Activated CD8-positive, alpha-beta T cell treated with anti-CD3 and anti-CD28 coated beads, Interleukin-2, amount 10 ng/mL, durations not matched to agents 7 days and 5 days (primary cell): ENCODE measurements at regions of chr9 and their contacts with region 1.

Region 1: DNA sequence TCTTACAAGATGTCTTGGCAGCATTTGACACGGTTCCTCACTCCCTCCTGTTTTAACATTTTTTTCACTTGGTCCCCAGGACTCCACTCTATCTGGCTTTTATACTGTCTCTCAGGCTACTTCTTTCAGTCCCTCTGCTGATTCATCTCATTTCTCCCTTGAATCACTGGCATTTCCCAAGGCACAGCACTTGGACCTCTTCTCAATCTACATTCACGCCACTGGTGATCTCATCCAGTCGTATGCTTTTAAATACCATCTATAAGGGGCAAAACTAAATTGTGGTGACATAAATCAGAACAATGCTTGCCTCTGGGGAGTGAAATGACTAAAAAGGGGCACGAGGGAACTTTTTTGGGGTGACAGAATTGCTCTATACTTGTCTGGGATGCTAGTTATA is 47.1 kb downstream of the MAPKAP1 start:
- DNase-seq: no peak
- ATAC-seq: no peak
- H3K4me3 Mint-ChIP-seq: no peak overlapping the region
- H3K27ac Mint-ChIP-seq: no peak overlapping the region
- H3K4me1 Mint-ChIP-seq: peaks cover 11% of the 10 kb centered on the region
- H3K27me3 Mint-ChIP-seq: no peaks in the 10 kb centered on the region

Region 2: DNA sequence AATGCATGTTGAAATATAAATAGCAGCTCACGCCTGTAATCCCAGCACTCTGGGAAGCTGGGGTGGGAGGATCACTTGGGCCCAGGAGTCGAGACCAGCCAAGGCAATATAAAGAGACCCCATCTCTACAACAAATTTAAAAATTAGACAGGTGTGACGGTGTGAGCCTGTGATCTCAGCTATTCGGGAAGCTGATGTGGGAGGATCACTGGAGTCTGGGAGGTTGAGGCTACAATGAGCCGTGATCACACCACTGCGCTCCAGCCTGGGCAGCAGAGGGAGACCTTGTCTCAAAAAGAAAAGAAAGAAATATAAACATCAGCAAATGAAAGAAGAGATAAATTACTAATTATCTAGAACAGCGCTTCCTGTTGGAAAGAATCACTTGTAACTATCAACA is 58.0 kb before region 1 on chr9:
- CTCF ChIA-PET with region 1: no interaction called
- POLR2A ChIA-PET with region 1: no interaction called
- DNase-seq: no peak
- ATAC-seq: no peak
- H3K4me3 Mint-ChIP-seq: no peak overlapping the region
- H3K27ac Mint-ChIP-seq: no peak overlapping the region
- H3K4me1 Mint-ChIP-seq: no peaks in the 10 kb centered on the region
- H3K27me3 Mint-ChIP-seq: no peaks in the 10 kb centered on the region

Region 3: GRCh38 chr9:125646621-125647100 is 13.3 kb before region 1 on chr9:
- CTCF ChIA-PET with region 1: interaction called, 13 read pairs
- POLR2A ChIA-PET with region 1: no interaction called
- DNase-seq: no peak
- ATAC-seq: peak; percentile 53
- H3K4me3 Mint-ChIP-seq: peak overlapping the region; percentile 50
- H3K27ac Mint-ChIP-seq: peak overlapping the region; percentile 80
- H3K4me1 Mint-ChIP-seq: peaks cover 64% of the 10 kb centered on the region
- H3K27me3 Mint-ChIP-seq: no peaks in the 10 kb centered on the region